ENCODE measurements at regions of chr5 and their contacts with region 1.

Region 1: GRCh38 chr5:17216176-17216973 is 1.1 kb upstream of the BASP1 start:
- DNase-seq: peak; percentile 94
- H3K4me3 ChIP-seq: peak overlapping the region; percentile 91
- H3K27ac ChIP-seq: peak overlapping the region; percentile 87
- H3K4me1 ChIP-seq: peaks cover 35% of the 10 kb centered on the region
- H3K27me3 ChIP-seq: no peaks in the 10 kb centered on the region
- CTCF ChIP-seq: peak; percentile 83

Region 2: DNA sequence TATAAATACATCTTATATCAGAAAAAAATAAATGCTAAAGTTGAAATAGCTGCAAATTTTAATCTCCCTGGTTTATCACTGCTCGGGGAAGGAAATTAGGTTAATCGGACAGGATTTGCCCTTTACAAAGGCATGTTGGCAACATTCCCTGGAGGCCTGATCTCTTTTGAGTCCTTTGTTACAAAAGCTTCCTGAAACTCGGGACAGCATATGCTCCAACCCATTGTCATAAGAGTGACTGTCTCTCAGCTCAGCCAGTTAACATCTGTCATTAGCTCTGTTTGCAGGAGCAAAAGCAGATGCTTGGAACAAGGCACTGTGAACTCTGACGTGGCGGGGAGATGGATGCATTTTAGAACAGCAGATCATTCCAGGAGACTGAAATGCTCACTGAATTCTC is 360.9 kb before region 1 on chr5:
- CTCF ChIA-PET with region 1: interaction called, 10 read pairs
- POLR2A ChIA-PET with region 1: no interaction called
- intact Hi-C with region 1: no loop called
- DNase-seq: peak; percentile 90
- H3K4me3 ChIP-seq: peak overlapping the region; percentile 17
- H3K27ac ChIP-seq: peak overlapping the region; percentile 72
- H3K4me1 ChIP-seq: peaks cover 75% of the 10 kb centered on the region
- H3K27me3 ChIP-seq: no peaks in the 10 kb centered on the region
- CTCF ChIP-seq: no peak

Region 3: DNA sequence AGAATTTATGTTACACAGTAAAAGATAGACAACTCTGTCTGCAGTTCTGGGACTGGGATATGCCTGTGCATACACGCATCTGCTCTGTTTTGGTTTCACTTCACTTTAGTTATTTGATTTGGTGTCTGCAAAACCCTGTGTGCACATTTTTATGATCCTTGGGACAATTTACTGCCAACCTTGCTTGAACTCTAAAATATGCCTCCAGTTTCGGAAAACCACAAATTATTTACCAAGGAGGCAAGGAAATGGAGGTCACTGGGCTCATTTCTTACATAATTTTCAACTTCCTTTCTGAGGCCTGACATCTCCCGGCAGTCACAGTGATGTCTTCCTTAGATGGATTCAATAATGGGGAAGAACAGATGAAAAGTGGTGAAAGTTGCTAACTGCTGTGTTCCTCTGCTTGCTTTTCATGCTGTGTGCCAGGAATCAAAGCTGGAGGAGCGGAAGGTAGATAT is 220.4 kb after region 1 on chr5:
- CTCF ChIA-PET with region 1: interaction called, 3 read pairs
- POLR2A ChIA-PET with region 1: no interaction called
- intact Hi-C with region 1: loop called (anchors 2 kb)
- DNase-seq: peak; percentile 94
- H3K4me3 ChIP-seq: peak overlapping the region; percentile 8
- H3K27ac ChIP-seq: peak overlapping the region; percentile 82
- H3K4me1 ChIP-seq: peaks cover 55% of the 10 kb centered on the region
- H3K27me3 ChIP-seq: no peaks in the 10 kb centered on the region
- CTCF ChIP-seq: no peak

Region 4: DNA sequence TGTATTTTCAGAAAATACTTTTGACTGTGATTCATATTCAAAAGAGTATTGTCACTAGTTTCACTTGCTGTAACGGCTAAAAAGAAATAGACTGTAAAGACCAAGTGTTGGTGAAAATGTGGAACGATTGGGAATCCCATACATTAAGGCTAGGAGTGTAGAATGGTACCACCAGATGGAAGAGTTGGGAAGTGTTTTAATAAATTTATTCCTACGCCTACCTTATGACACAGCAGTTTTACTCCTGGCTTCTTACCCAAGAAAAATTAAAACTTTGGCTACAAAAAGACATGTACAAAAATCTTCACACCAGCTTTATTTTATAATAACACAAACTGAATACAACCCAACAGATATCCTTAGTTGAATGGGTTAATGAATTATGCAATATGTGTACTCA is 674.1 kb after region 1 on chr5:
- CTCF ChIA-PET with region 1: no interaction called
- POLR2A ChIA-PET with region 1: no interaction called
- intact Hi-C with region 1: loop called (anchors 5 kb)
- DNase-seq: peak; percentile 47
- H3K4me3 ChIP-seq: no peak overlapping the region
- H3K27ac ChIP-seq: no peak overlapping the region
- H3K4me1 ChIP-seq: peaks cover 14% of the 10 kb centered on the region
- H3K27me3 ChIP-seq: no peaks in the 10 kb centered on the region
- CTCF ChIP-seq: peak; percentile 38; the same call in 1 of the 2 replicates

Region 5: DNA sequence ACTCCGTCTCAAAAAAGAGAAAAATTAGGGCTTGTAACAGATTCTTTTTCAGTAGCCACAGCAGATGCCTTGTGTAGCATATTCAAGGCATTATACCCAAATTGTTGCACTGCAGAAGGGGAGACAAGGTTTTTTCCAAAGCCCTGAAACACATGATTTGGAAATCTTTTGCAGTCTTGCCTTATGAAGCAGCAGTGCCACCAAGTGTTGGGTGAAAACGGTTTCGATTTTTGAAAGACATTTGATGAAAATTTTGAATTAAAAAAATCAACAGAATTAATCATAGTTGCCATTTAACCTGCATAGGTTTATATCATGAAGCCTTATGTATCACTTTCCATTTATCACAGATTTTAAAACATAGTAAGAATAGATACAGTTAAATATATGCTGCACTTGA is 897.3 kb after region 1 on chr5:
- CTCF ChIA-PET with region 1: interaction called, 5 read pairs
- POLR2A ChIA-PET with region 1: no interaction called
- intact Hi-C with region 1: loop called (anchors 2 kb)
- DNase-seq: peak; percentile 69
- H3K4me3 ChIP-seq: no peak overlapping the region
- H3K27ac ChIP-seq: no peak overlapping the region
- H3K4me1 ChIP-seq: peaks cover 21% of the 10 kb centered on the region
- H3K27me3 ChIP-seq: no peaks in the 10 kb centered on the region
- CTCF ChIP-seq: peak; percentile 59

Region 6: DNA sequence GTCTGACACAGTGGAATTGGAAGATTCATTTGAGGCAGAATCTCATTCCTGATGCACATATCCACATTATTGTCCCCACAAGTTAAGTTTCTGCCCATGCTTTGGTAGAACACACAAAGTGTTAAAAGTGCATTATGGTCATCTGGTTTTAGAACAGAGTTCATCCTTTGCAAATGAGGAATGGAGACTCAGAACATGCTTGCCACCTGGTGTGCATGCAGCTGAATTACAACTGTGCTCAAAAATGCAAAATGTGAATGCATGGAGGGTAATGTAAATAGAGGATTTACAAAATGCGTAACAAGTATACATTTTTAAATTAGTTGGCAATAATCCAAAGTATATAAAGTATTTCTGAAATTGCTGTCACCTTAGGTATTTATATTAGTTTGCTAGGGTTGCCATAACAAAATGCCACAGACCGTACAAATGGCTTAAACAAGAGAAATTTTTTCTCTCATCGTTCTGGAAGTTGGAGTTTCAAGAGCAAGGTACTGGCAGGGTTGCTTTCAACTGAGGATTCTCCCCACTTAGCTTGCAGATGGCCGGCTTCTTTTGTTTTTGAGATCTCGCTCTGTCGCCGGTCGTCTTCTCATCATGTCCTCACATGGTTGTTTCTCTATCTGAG is 1089.0 kb after region 1 on chr5:
- CTCF ChIA-PET with region 1: interaction called, 10 read pairs
- POLR2A ChIA-PET with region 1: no interaction called
- intact Hi-C with region 1: loop called (anchors 1 kb)
- DNase-seq: peak; percentile 65
- H3K4me3 ChIP-seq: no peak overlapping the region
- H3K27ac ChIP-seq: no peak overlapping the region
- H3K4me1 ChIP-seq: peaks cover 7% of the 10 kb centered on the region
- H3K27me3 ChIP-seq: no peaks in the 10 kb centered on the region
- CTCF ChIP-seq: peak; percentile 86